Activated CD4-positive, alpha-beta T cell treated with anti-CD3 and anti-CD28 coated beads, Interleukin-2, amount 10 ng/mL, durations not matched to agents 24 days and 14 days (primary cell): ENCODE measurements at regions of chrX and their contacts with region 1.

Region 1: GRCh38 chrX:102950908-102951866 is 14.1 kb downstream of the RAB40AL start:
- DNase-seq: peak; percentile 82
- H3K4me3 Mint-ChIP-seq: peak overlapping the region; percentile 3
- H3K27ac Mint-ChIP-seq: no peak overlapping the region
- H3K4me1 Mint-ChIP-seq: no peaks in the 10 kb centered on the region
- H3K27me3 Mint-ChIP-seq: no peaks in the 10 kb centered on the region

Region 2: GRCh38 chrX:102883176-102883915 is 67.8 kb before region 1 on chrX:
- intact Hi-C with region 1: no loop called
- DNase-seq: no peak
- H3K4me3 Mint-ChIP-seq: no peak overlapping the region
- H3K27ac Mint-ChIP-seq: no peak overlapping the region
- H3K4me1 Mint-ChIP-seq: no peaks in the 10 kb centered on the region
- H3K27me3 Mint-ChIP-seq: no peaks in the 10 kb centered on the region

Region 3: DNA sequence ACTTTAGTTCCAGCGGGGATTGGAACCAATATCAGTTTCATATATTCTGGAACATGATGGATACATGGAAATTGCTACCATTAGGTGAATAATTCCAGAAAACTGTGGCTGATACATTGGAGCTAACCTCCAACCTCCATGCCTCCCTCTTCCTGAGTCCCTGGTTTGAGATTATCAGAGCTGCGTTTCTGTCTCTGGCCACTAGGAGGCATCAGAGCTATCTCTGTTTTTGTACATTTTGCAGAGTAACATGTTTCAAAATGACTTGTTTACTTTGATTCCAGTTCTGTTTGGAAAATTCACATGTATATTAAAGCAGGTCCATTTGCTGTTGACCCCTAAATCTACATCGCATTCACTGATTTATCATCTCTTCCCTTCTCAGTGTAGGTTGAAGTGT is 16.6 kb before region 1 on chrX:
- intact Hi-C with region 1: loop called (anchors 1 kb)
- DNase-seq: peak; percentile 69
- H3K4me3 Mint-ChIP-seq: no peak overlapping the region
- H3K27ac Mint-ChIP-seq: no peak overlapping the region
- H3K4me1 Mint-ChIP-seq: no peaks in the 10 kb centered on the region
- H3K27me3 Mint-ChIP-seq: no peaks in the 10 kb centered on the region

Region 4: DNA sequence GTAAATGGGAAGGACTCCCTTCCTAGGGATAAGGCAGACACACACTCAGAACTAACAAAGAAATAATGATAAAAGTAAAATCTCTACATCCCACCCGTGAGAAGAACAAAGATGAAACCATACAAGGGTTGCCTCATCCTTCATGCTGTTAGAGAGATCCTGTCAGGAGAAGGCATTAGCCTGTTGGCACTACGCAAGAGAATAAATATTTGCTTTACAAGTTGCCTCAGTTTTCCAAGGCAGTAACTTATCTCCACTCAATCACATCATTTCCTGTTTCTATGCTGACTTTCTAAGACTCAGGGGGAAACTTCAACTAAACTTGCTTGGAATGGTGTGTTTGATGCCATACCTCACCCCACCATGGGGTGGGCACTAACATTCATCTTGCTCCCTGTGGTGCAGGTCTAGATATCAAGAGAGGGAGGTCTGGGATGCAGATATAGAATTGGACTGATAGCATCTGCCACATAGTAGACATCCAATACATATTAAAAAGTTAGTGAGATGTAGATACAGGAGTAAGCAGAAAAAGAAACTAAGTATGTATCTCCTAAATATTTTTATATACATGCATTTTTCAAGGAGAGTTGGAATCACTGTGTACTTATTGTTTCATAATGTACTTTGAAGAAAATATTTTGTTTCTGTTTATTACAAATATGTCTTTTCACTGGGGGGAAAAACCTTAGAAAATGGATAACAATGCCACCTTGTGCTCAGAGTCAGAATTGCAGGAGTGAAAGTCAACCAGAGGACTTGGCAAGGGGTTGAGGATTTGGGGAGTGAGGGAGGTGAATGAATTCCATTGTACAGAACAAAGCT is 206.5 kb after region 1 on chrX:
- intact Hi-C with region 1: loop called (anchors 5 kb)
- DNase-seq: peak; percentile 62
- H3K4me3 Mint-ChIP-seq: no peak overlapping the region
- H3K27ac Mint-ChIP-seq: no peak overlapping the region
- H3K4me1 Mint-ChIP-seq: no peaks in the 10 kb centered on the region
- H3K27me3 Mint-ChIP-seq: no peaks in the 10 kb centered on the region

Region 5: GRCh38 chrX:103175944-103176753 is 225.0 kb after region 1 on chrX:
- intact Hi-C with region 1: loop called (anchors 1 kb)
- DNase-seq: peak; percentile 81
- H3K4me3 Mint-ChIP-seq: peak overlapping the region; percentile 57
- H3K27ac Mint-ChIP-seq: no peak overlapping the region
- H3K4me1 Mint-ChIP-seq: peaks cover 3% of the 10 kb centered on the region
- H3K27me3 Mint-ChIP-seq: peaks cover 8% of the 10 kb centered on the region

Region 6: DNA sequence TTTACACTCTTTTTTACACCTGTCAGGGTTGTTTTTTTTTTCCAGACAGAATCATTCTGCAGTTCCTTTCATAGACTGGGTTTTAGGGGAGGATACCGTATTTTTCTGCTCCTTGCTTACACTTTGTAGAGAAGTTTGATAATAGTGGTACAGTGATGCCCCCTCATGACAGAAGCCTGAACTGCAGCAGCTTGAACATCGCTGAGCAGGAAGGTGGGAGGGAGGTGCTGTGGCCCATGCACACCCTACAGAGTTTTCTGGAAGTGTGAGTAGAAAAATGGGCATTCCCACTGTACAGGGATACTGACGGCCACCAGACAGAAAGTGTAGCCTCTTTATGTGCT is 513.6 kb after region 1 on chrX:
- intact Hi-C with region 1: loop called (anchors 2 kb)
- DNase-seq: peak; percentile 92
- H3K4me3 Mint-ChIP-seq: peak overlapping the region; percentile 92
- H3K27ac Mint-ChIP-seq: no peak overlapping the region
- H3K4me1 Mint-ChIP-seq: peaks cover 8% of the 10 kb centered on the region
- H3K27me3 Mint-ChIP-seq: no peaks in the 10 kb centered on the region